Ascending aorta (tissue), 2 donors: ENCODE measurements at regions of chr19 and their contacts with region 1.

Region 1: GRCh38 chr19:3035542-3036118 is 6.5 kb upstream of the TLE2 start:
- DNase-seq: peak; percentile 95 to 99
- H3K4me3 ChIP-seq: peak overlapping the region; percentile 69 to 80
- H3K27ac ChIP-seq: peak overlapping the region; percentile 88 to 94
- H3K4me1 ChIP-seq: peaks cover 0 to 8% of the 10 kb centered on the region in 2 donors
- H3K27me3 ChIP-seq: no peaks in the 10 kb centered on the region
- CTCF ChIP-seq: peak in 1 of 3 experiments; percentile 2

Region 2: DNA sequence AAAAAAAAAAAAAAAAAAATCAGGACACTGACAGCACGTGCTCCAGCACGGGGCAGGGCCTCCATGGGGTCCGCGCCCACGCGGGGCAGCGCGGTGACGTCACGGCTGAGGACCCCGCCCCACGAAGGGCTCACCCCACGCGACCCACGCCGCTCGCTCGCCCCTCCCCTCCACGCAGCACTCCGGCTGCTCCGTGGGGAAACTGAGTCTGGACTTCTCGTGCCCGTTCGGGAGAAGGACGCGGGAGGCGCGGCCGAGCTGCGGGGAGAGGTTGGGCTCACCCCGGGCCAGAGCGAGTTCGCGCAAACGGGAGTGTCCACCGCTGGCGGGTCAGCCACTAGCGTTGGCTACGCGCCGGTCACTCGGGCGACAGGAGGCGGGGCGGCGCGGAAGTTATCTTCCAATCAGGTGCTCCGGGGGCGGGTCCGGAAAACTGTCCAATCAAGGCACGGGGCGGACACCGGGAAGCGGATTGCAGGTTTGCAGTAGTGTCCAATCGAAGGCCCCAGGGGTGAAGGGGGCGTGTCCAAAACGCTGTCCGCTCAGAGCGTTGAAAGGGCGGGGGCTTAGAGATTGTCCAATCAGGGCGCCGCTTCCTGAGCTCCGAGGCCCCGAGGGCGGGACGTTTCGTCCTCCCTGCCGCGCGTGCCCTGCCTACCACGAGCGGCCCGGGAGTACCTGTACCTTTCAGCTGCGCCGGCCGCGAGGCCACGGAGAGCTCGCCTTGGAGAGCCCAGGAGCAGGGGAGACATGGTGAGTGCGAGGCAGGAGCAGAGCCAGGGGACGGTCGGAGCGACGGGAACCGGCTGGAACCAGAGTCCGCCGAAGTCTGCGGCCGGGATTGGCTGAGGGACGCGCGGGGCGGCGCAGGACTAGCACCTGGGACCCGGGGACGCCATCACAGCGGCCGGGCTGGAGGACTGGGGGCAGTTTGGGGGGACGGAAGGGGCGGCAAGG is 135.1 kb before region 1 on chr19 and contains the start of gene ZNF57:
- intact Hi-C with region 1: loop called (anchors 1 kb)
- DNase-seq: peak; percentile 99 to 100
- H3K4me3 ChIP-seq: peak within 1 kb of the TSS; percentile 71 to 82
- H3K27ac ChIP-seq: peak within 1 kb of the TSS; percentile 63 to 69
- H3K4me1 ChIP-seq: peaks cover 0 to 3% of the 10 kb centered on the region in 2 donors
- H3K27me3 ChIP-seq: no peaks in the 10 kb centered on the region
- CTCF ChIP-seq: peak in 1 of 3 experiments; percentile 12
- total RNA-seq, gene ZNF57: 9.8 TPM

Region 3: DNA sequence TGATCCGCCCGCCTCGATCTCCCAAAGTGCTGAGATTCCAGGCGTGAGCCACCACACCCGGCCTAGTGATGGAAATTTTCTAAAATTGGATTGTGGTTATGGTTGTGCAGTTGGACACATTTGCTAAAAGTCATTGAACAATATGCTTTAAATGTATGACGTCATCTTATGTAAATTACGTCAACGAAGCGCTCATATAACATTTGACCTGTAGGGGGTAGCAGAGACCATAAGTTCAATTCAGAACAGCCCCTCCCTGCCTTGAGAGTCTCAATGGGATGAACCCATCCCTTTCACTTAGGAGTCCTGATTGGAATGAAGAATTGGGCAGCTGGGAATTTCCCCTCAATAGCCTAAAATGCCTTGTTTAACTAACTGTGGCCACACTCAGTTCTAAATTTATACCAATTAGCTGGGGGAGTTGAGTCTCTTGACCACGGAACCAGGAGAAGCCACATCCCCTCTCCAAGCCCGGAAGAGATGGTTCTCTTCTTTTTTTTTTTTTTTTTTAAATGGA is 73.5 kb before region 1 on chr19:
- intact Hi-C with region 1: loop called (anchors 1 kb)
- DNase-seq: peak in 1 of 2 donors; percentile 75
- H3K4me3 ChIP-seq: no peak overlapping the region
- H3K27ac ChIP-seq: no peak overlapping the region
- H3K4me1 ChIP-seq: no peaks in the 10 kb centered on the region
- H3K27me3 ChIP-seq: no peaks in the 10 kb centered on the region
- CTCF ChIP-seq: peak; percentile 72 to 93 (median 78)

Region 4: DNA sequence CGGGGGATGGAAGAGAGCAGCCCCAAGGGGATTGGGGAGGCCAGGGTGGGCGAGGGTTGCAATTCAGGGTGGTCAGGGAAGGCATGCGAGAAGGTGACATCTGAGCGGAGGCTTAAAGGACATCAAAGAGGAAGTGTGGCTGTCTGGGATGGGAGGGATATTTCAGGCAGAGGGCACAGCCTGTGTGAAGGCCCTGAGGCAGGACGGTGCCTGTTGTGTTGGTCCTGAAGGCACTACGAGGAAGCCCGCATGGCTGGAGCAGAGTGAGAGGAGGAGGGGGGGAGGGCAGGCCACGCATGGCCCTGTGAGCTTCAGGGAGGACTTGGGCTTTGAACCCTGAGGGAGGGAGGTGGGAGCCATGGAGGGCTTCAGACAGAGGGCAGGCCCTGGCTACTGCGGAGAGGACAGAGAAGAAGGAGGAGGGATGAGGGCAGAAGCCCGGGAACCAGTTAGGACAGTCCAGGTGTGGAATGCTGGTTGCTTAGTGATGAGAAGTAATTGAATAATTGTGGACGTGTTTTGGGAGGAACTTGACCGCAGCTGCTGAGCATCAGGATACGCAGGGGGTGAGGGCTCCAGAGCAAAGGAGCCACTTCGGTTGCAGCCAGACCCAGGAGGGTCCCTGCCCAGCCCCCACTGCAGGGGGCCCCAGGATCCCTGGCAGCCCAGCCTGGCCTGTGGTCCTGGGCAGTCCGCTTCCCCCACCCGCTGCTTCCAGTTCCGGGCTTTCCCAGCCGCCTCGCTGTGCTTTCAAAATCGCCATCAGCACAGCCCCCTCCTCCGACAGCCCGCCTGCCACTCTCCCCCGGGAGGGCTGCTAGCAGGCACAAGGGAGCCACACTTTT is 52.1 kb before region 1 on chr19:
- intact Hi-C with region 1: loop called (anchors 1 kb)
- DNase-seq: peak; percentile 53 to 70
- H3K4me3 ChIP-seq: peak overlapping the region; percentile 46 to 61
- H3K27ac ChIP-seq: peak overlapping the region; percentile 88 to 96
- H3K4me1 ChIP-seq: peaks cover 15 to 23% of the 10 kb centered on the region in 2 donors
- H3K27me3 ChIP-seq: no peaks in the 10 kb centered on the region
- CTCF ChIP-seq: no peak

Region 5: GRCh38 chr19:3062168-3063102 is 26.8 kb after region 1 on chr19 and contains the start of gene TLE5:
- intact Hi-C with region 1: loop called (anchors 1 kb)
- DNase-seq: peak in 1 of 2 donors; percentile 77
- H3K4me3 ChIP-seq: peak within 1 kb of the TSS; percentile 75 to 86
- H3K27ac ChIP-seq: peak within 1 kb of the TSS; percentile 87
- H3K4me1 ChIP-seq: peaks cover 13 to 14% of the 10 kb centered on the region in 2 donors
- H3K27me3 ChIP-seq: no peaks in the 10 kb centered on the region
- CTCF ChIP-seq: no peak
- total RNA-seq, gene TLE5: 559 TPM

Region 6: GRCh38 chr19:3762501-3763459 is 727.1 kb after region 1 on chr19 and contains the start of gene MRPL54:
- intact Hi-C with region 1: loop called (anchors 5 kb)
- DNase-seq: peak; percentile 97 to 100
- H3K4me3 ChIP-seq: peak within 1 kb of the TSS; percentile 88 to 95
- H3K27ac ChIP-seq: peak within 1 kb of the TSS; percentile 87 to 98
- H3K4me1 ChIP-seq: peaks cover 9 to 22% of the 10 kb centered on the region in 2 donors
- H3K27me3 ChIP-seq: no peaks in the 10 kb centered on the region
- CTCF ChIP-seq: no peak
- total RNA-seq, gene MRPL54: 34.9 TPM